Keratinocyte (primary cell): ENCODE measurements at regions of chr18 and their contacts with region 1.

Region 1: GRCh38 chr18:7177116-7177744 is 53.7 kb upstream of the LRRC30 start:
- DNase-seq: peak; percentile 25
- H3K4me3 ChIP-seq: no peak overlapping the region
- H3K27ac ChIP-seq: no peak overlapping the region
- H3K4me1 ChIP-seq: no peaks in the 10 kb centered on the region
- H3K27me3 ChIP-seq: no peaks in the 10 kb centered on the region
- CTCF ChIP-seq: peak; percentile 77 to 90 (median 86)

Region 2: DNA sequence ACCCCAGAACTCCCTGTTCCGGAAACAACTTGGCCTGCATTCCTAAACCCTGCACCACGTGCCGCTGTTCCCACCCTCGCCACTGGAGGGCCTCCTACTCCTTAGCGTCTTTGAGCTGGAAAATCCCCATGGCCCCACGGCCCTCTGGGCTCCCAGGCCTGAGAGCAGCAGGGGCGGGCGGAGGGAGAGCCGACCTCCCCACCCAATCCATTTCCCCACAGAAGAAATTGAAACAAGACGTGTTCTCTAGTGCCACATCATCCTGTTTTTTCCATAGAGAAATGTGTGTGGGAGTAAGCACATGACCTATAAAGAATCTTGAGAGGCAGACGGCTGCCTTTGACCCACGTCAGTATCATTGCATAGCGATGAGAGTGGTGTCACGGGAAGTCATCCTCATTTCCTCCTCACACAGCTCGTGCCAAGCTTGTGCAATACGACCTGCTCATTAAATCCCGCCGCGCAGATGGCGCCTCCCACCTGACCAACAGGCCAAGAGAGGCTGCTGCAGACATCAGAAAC is 138.8 kb before region 1 on chr18:
- dilution Hi-C with region 1: loop called (anchors 25 kb)
- DNase-seq: no peak
- H3K4me3 ChIP-seq: no peak overlapping the region
- H3K27ac ChIP-seq: peak overlapping the region; percentile 65
- H3K4me1 ChIP-seq: peaks cover 8% of the 10 kb centered on the region
- H3K27me3 ChIP-seq: no peaks in the 10 kb centered on the region
- CTCF ChIP-seq: peak; percentile 81 to 94 (median 86)